Psoas muscle (tissue), 8 donors: ENCODE measurements at regions of chr1 and their contacts with region 1.

Region 1: GRCh38 chr1:234722904-234723720 is 113.1 kb upstream of the IRF2BP2 start:
- DNase-seq: peak; percentile 78 to 82
- ATAC-seq: peak; percentile 27 to 50 (median 30)
- H3K4me3 ChIP-seq: peak overlapping the region; percentile 44
- H3K27ac ChIP-seq: peak overlapping the region; percentile 94
- H3K4me1 ChIP-seq: peaks cover 84% of the 10 kb centered on the region
- H3K27me3 ChIP-seq: no peaks in the 10 kb centered on the region
- CTCF ChIP-seq: no peak

Region 2: GRCh38 chr1:234610348-234611152 is 112.6 kb before region 1 on chr1:
- intact Hi-C with region 1: loop called (anchors 1 to 5 kb)
- DNase-seq: peak; percentile 96 to 98
- ATAC-seq: peak; percentile 63 to 78 (median 72)
- H3K4me3 ChIP-seq: peak overlapping the region; percentile 72
- H3K27ac ChIP-seq: peak overlapping the region; percentile 99
- H3K4me1 ChIP-seq: peaks cover 36% of the 10 kb centered on the region
- H3K27me3 ChIP-seq: no peaks in the 10 kb centered on the region
- CTCF ChIP-seq: peak; percentile 6

Region 3: DNA sequence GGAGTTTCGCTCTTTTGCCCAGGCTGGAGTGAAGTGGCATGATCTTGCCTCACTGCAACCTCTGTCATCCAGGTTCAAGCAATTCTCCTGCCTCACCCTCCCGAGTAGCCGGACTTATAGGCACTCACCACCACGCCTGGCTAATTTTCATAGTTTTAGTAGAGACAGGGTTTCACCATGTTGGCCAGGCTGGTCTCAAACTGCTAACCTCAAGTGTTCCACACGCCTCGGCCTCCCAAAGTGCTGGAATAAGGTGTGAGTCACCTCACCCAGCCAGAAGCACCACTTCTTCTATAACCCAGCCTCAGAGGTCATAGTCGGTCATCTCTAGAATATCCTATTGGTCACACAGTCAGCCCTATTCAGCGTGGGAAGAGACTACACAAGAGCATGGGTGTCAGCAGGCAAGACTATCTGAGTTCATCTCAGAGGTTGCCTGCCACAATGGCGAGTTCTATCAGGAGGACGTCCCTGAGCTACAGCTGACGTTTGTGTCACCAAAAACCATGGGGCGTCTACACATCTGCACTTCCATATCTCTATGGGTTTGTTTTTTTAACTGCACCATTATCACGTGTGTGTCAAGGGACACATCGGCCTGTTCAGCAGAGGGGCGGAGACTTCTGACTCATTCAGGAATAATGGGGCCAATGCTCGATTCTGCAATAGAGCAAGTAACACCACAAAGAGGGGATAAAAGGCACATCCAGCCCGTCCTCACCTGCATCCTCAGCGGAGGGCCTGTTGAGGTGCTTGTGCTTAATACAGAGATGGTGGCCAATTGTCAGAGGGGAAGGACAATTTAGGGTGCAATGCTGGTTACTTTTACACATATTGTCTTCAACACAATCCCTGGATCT is 143.1 kb after region 1 on chr1:
- intact Hi-C with region 1: no loop called
- DNase-seq: peak; percentile 57 to 62
- ATAC-seq: peak; percentile 58 to 75 (median 68)
- H3K4me3 ChIP-seq: no peak overlapping the region
- H3K27ac ChIP-seq: peak overlapping the region; percentile 82
- H3K4me1 ChIP-seq: peaks cover 45% of the 10 kb centered on the region
- H3K27me3 ChIP-seq: no peaks in the 10 kb centered on the region
- CTCF ChIP-seq: no peak

Region 4: DNA sequence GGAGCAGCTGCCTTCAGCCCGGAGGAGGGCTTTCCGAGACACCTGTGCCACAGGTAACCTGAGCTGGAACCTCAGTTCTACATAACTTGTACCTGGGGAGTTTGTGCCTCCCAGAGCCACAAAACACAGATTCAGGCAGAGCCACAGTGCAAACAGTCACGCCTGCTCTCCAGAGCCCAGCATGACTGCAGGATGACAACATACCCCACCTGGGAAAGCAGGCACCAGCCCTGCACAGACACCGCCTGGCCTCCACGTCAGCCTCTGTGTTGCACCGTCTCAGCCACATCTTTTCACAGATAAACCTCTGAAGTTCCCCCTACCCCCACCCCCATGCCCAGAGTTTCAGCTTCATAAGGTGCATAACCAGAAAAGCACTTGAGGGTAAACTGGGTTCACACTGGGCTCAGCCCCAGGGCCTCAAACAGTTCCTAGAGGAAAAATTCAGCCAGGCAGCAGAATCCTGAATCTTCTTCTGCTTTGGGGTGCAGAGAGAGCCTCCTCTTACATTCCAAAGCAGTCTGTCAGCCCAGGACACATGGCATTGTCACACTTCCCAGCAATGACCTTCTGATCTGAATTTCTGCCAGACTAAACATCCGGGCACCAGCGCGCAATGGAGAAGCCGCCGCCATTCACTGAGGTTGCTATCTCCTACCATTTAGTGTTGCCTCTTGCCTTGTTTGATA is 176.1 kb after region 1 on chr1:
- intact Hi-C with region 1: loop called in 1 of 2 experiments (anchors 5 kb)
- DNase-seq: no peak
- ATAC-seq: peak; percentile 40 to 71 (median 54)
- H3K4me3 ChIP-seq: no peak overlapping the region
- H3K27ac ChIP-seq: peak overlapping the region; percentile 90
- H3K4me1 ChIP-seq: peaks cover 27% of the 10 kb centered on the region
- H3K27me3 ChIP-seq: no peaks in the 10 kb centered on the region
- CTCF ChIP-seq: no peak

Region 5: DNA sequence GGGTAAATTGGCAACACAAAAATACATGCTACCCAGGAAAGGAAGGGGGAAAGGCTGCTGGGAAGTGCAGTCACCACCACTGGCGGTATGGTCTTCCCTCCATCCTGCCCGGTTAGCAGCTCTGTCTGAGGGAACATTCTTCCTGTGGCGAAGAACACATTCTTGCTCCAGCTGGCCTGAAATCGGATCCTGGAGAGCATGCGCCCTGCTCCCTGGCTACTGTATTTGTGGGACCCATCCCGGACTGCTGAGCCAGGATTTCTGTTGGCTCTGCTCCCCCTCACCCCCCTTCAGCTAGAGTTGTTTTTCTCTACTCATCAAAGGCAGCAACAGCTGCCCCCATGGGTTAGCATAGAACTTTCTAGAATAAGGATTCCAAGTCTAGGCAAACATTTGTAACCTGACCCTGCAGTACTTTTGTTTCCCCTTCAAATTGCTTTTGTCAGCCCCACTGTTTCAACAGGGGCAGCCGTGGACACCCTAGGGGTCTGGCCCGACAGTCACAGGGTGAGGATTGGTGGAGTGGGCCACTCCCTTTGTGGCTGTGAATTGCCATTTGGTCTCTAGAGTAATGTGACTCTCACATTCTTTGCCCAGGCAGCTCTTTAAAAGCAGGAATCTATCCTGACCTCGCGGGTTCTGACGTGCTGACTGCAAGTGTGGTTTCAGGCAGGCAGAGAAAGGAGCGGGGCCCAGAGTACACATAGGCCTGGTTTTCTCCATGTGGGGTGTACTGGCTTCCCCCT is 247.8 kb after region 1 on chr1:
- intact Hi-C with region 1: loop called in 1 of 2 experiments (anchors 2 kb)
- DNase-seq: peak; percentile 86 to 93
- ATAC-seq: peak; percentile 83 to 92 (median 86)
- H3K4me3 ChIP-seq: peak overlapping the region; percentile 59
- H3K27ac ChIP-seq: peak overlapping the region; percentile 94
- H3K4me1 ChIP-seq: peaks cover 55% of the 10 kb centered on the region
- H3K27me3 ChIP-seq: no peaks in the 10 kb centered on the region
- CTCF ChIP-seq: no peak

Region 6: DNA sequence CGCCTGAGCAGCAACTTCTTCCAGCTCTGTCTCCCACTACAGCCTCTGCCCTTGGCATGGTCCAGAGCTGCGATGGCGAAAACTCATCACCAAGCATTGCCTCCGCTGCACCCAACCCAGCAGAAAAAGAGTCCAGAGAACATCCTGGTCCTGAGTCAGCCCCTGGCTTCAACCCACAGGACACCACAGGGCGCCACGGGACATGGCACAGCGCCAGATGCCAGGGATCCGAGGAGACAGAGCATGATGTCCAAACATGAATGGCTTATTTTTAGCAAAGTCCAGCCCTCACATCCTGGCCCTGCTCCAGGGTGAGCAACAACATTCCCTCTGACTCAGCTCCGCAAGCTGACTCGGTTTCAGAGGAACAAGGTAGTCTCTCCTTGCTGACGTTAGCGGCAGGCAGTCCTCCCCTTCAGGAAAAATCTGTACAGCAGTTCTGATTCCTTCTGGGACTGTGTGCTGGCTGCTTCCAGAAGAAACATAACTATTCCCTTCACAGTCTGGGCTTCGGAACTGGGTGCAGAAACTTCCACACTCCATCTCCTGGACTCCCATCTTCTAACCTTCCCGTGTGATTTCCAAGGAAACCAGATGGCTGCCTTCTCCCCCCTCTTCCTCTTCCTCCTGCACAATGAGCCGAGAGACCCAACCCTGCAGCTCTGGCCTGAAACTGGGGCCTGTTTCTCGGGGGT is 274.2 kb after region 1 on chr1:
- intact Hi-C with region 1: loop called in 1 of 2 experiments (anchors 1 kb)
- DNase-seq: peak; percentile 100
- ATAC-seq: peak; percentile 90 to 95 (median 92)
- H3K4me3 ChIP-seq: peak overlapping the region; percentile 42
- H3K27ac ChIP-seq: peak overlapping the region; percentile 98
- H3K4me1 ChIP-seq: peaks cover 32% of the 10 kb centered on the region
- H3K27me3 ChIP-seq: no peaks in the 10 kb centered on the region
- CTCF ChIP-seq: no peak